A549 (cell line): ENCODE measurements at regions of chr11 and their contacts with region 1.

Region 1: DNA sequence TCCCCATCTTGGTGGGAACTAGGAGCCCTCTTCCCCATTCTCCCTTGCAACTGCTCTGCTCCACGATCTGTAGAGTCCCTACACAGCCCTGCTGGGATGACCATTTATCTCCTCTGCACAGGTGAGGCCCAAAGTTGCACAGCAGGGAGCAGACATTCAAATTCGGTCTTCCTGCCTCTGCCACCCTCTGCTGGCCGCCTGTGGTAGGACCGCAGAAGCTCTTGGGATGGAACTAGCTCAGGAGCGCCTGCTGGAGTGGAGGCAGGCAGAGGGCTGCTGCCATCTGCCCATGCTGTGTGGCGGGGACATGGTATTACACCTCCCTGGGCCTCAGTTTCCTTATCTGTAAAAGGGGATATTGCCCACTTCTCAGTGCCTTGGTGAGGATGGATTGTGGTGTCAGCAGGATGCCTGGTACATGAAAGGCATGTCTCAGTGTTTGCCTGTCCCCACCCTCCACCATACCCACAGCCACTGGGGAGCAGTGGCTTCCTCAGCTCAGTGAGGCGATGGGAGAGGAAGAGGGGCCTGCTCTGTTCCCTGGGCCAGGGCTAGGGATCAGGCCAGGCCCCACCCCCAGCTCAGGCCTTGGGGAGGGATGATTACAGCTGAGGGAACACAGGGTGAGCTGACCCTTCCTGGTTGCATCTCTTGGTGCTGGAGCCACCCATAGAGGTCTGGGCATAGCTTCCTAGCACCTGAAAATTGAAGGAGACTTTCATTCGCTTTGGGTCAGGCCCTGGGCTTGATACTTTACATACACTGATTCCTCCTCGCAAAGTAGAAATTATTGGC is 11.3 kb upstream of the OMP start:
- DNase-seq: peak; percentile 85 to 90
- ATAC-seq: peak; percentile 89 to 95
- H3K4me3 ChIP-seq: no peak overlapping the region
- H3K27ac ChIP-seq: no peak overlapping the region
- H3K4me1 ChIP-seq: peaks cover 6% of the 10 kb centered on the region; the same call in 1 of the 3 replicates
- CTCF ChIP-seq: peak; percentile 95
- EP300 ChIP-seq: no peak
- POLR2A ChIP-seq: no peak
- RAD21 ChIP-seq: peak; percentile 95 to 96

Region 2: DNA sequence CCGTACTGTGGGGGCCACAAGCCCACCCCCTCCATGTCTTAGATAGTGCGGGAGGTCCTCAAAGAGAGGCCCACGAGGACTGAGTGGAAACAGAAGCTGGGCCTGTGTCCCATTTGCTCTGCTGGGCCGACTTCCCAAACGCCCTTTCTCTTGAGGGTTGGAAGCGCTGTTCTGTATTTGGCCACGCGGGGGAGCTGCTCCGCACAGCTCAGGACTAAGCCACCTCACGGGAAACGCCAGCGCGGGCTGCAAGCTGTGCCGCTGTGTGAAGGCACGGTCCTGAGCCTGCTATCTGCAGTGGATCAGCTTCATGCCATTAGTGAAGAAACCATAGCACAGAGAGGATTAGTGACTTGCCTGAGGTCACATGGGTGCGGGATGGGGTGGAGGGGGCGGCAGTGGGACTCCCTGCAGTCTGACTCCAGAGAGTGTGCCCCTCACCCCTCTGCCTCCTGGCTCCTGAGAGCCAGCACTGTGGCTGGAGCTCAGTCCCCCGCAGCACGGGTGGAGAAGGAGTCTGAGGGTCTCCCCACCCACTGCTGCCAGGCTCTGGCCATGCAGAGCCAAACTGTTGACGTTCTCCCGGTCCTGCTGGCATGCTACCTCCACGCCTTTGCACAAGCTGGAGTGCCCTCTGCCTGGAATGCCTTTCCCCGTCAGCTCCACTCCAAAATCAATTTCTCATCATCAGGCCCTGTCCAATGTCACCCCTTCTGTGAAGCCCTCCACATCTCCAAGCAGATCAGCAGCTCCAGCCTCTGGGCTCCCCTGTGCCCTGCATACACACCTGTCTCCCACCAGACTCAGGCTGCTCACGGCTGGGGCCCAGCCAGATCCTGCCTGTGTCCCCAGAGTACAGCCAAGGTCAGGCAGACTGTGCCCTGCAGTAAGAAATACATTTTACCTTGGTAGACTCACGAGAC is 369.3 kb before region 1 on chr11:
- CTCF ChIA-PET with region 1: interaction called, 12 read pairs
- POLR2A ChIA-PET with region 1: no interaction called
- DNase-seq: peak; percentile 67 to 80
- ATAC-seq: peak; percentile 91 to 97
- H3K4me3 ChIP-seq: no peak overlapping the region
- H3K27ac ChIP-seq: peak overlapping the region in 1 of 2 experiments; percentile 61; a peak in 3 of 6 replicates
- H3K4me1 ChIP-seq: 0 out of 3 replicates have a peak, but pooled peaks cover 4% of the 10 kb centered on the region
- CTCF ChIP-seq: peak; percentile 83
- EP300 ChIP-seq: no peak
- POLR2A ChIP-seq: no peak
- RAD21 ChIP-seq: peak; percentile 68

Region 3: DNA sequence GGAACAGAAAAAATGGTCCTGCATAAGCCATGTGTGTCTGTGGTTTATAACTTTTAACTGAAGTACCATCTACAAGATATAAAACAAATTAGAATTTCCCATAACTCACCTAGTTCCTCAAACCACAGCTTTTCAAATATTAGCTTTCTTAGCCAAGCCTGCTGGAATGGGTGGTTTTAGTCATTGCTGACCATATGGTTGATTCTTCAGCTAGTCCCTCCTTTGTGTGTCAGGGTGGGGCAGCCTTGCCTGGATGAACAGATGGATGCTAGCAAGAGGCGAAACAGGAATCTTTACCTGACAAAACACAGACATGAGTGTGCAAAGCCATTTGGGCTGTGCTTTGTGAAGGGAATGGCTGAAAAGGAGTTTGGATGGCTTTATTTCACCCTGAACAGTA is 64.1 kb before region 1 on chr11:
- CTCF ChIA-PET with region 1: interaction called, 11 read pairs
- POLR2A ChIA-PET with region 1: no interaction called
- DNase-seq: peak in 1 of 2 experiments; percentile 40
- ATAC-seq: peak in 1 of 2 experiments; percentile 22; a peak in 2 of 6 replicates
- H3K4me3 ChIP-seq: no peak overlapping the region
- H3K27ac ChIP-seq: 0 out of 6 replicates have a peak overlapping the region, but pooled peaks of 1 of the 2 experiments have one; percentile 1
- H3K4me1 ChIP-seq: peaks cover 22% of the 10 kb centered on the region
- CTCF ChIP-seq: no peak
- EP300 ChIP-seq: no peak
- POLR2A ChIP-seq: no peak
- RAD21 ChIP-seq: no peak

Region 4: GRCh38 chr11:77066229-77067042 is 24.9 kb before region 1 on chr11 and contains the start of gene CAPN5:
- CTCF ChIA-PET with region 1: interaction called, 84 read pairs
- POLR2A ChIA-PET with region 1: interaction called, 9 read pairs
- DNase-seq: peak; percentile 89 to 95
- ATAC-seq: peak; percentile 89 to 97
- H3K4me3 ChIP-seq: peak within 1 kb of the TSS; percentile 65
- H3K27ac ChIP-seq: peak within 1 kb of the TSS; percentile 87 to 88
- H3K4me1 ChIP-seq: peaks cover 16% of the 10 kb centered on the region
- CTCF ChIP-seq: peak; percentile 38
- EP300 ChIP-seq: no peak
- POLR2A ChIP-seq: peak; percentile 72
- RAD21 ChIP-seq: peak in 1 of 2 experiments; percentile 26; a peak in 2 of 5 replicates
- polyA plus RNA-seq, gene CAPN5: 12.9 and 16.6 TPM in 2 replicates

Region 5: DNA sequence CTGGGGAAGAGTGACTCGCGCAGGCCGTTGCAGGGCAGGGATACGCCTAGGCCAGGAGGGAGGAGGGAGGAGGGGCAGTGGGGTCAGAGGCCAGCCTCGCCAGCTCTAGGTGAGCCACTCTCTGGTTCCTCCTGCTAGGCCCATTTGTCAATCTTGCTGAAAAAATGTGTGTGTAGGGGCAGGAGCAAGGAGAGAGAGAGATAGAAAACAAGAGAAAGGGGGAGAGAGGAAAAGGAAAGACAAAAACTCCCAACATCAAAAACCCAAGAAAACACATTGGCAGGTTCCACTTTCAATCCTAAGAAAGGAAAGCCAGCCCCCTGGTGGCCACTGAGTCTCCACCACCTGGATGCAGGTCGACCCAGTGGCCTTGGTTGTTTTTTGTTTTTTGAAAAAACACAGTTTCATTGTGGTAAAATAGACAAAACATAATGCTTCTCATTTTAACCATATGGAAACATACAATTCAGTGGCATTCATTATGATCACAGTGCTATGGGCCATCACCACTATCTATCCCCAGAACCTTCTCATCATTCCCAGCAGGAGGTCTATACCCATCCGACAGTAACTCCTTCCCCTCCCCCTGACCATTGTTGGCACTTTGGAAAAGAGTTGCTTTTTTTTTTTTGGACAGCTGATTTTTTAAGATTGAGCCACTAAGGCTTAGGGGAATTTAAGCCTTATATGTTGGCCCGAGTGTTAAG is 22.2 kb after region 1 on chr11:
- CTCF ChIA-PET with region 1: interaction called, 290 read pairs
- POLR2A ChIA-PET with region 1: no interaction called
- DNase-seq: peak; percentile 52 to 82
- ATAC-seq: peak; percentile 31 to 73; a peak in 3 of 6 replicates
- H3K4me3 ChIP-seq: no peak overlapping the region
- H3K27ac ChIP-seq: peak overlapping the region in 1 of 2 experiments; percentile 48; a peak in 2 of 6 replicates
- H3K4me1 ChIP-seq: peaks cover 31% of the 10 kb centered on the region
- CTCF ChIP-seq: peak; percentile 73
- EP300 ChIP-seq: no peak
- POLR2A ChIP-seq: no peak
- RAD21 ChIP-seq: peak; percentile 59 to 62